ENCODE measurements at regions of chrX and their contacts with region 1.

Region 1: GRCh38 chrX:72126539-72127140 is 5.1 kb downstream of the RTL5 start:
- DNase-seq: peak; percentile 67
- ATAC-seq: peak; percentile 64
- H3K4me3 Mint-ChIP-seq: no peak overlapping the region
- H3K27ac Mint-ChIP-seq: no peak overlapping the region
- H3K4me1 Mint-ChIP-seq: peaks cover 28% of the 10 kb centered on the region
- H3K27me3 Mint-ChIP-seq: no peaks in the 10 kb centered on the region
- CTCF ChIP-seq: no peak

Region 2: GRCh38 chrX:72018277-72019112 is 108.1 kb before region 1 on chrX:
- CTCF ChIA-PET with region 1: interaction called, 51 read pairs
- POLR2A ChIA-PET with region 1: interaction called, 11 read pairs
- intact Hi-C with region 1: loop called (anchors 1 kb)
- DNase-seq: peak; percentile 65
- ATAC-seq: peak; percentile 89
- H3K4me3 Mint-ChIP-seq: peak overlapping the region; percentile 38
- H3K27ac Mint-ChIP-seq: no peak overlapping the region
- H3K4me1 Mint-ChIP-seq: peaks cover 10% of the 10 kb centered on the region
- H3K27me3 Mint-ChIP-seq: peaks cover 5% of the 10 kb centered on the region
- CTCF ChIP-seq: no peak

Region 3: GRCh38 chrX:72094894-72095293 is 31.7 kb before region 1 on chrX:
- CTCF ChIA-PET with region 1: no interaction called
- POLR2A ChIA-PET with region 1: no interaction called
- intact Hi-C with region 1: loop called (anchors 5 kb)
- DNase-seq: peak; percentile 32
- ATAC-seq: peak; percentile 88
- H3K4me3 Mint-ChIP-seq: no peak overlapping the region
- H3K27ac Mint-ChIP-seq: peak overlapping the region; percentile 67
- H3K4me1 Mint-ChIP-seq: peaks cover 37% of the 10 kb centered on the region
- H3K27me3 Mint-ChIP-seq: peaks cover 2% of the 10 kb centered on the region
- CTCF ChIP-seq: no peak

Region 4: GRCh38 chrX:72181178-72182125 is 54.8 kb after region 1 on chrX and contains the start of gene PIN4:
- CTCF ChIA-PET with region 1: no interaction called
- POLR2A ChIA-PET with region 1: interaction called, 21 read pairs
- intact Hi-C with region 1: no loop called
- DNase-seq: peak; percentile 67
- ATAC-seq: peak; percentile 93
- H3K4me3 Mint-ChIP-seq: no peak within 1 kb of the TSS
- H3K27ac Mint-ChIP-seq: no peak within 1 kb of the TSS
- H3K4me1 Mint-ChIP-seq: peaks cover 11% of the 10 kb centered on the region
- H3K27me3 Mint-ChIP-seq: no peaks in the 10 kb centered on the region
- CTCF ChIP-seq: no peak
- total RNA-seq, gene PIN4: 10.1 and 10.9 TPM in 2 replicates

Region 5: GRCh38 chrX:72276478-72276953 is 149.9 kb after region 1 on chrX:
- CTCF ChIA-PET with region 1: no interaction called
- POLR2A ChIA-PET with region 1: interaction called, 5 read pairs
- intact Hi-C with region 1: loop called (anchors 5 kb)
- DNase-seq: no peak
- ATAC-seq: no peak
- H3K4me3 Mint-ChIP-seq: peak overlapping the region; percentile 88
- H3K27ac Mint-ChIP-seq: peak overlapping the region; percentile 76
- H3K4me1 Mint-ChIP-seq: peaks cover 29% of the 10 kb centered on the region
- H3K27me3 Mint-ChIP-seq: no peaks in the 10 kb centered on the region
- CTCF ChIP-seq: no peak

Region 6: GRCh38 chrX:72663737-72664136 is 537.1 kb after region 1 on chrX:
- CTCF ChIA-PET with region 1: no interaction called
- POLR2A ChIA-PET with region 1: no interaction called
- intact Hi-C with region 1: no loop called
- DNase-seq: no peak
- ATAC-seq: no peak
- H3K4me3 Mint-ChIP-seq: no peak overlapping the region
- H3K27ac Mint-ChIP-seq: no peak overlapping the region
- H3K4me1 Mint-ChIP-seq: no peaks in the 10 kb centered on the region
- H3K27me3 Mint-ChIP-seq: peaks cover 9% of the 10 kb centered on the region
- CTCF ChIP-seq: no peak